CD8-positive, alpha-beta T cell (primary cell): ENCODE measurements at regions of chr4 and their contacts with region 1.

Region 1: GRCh38 chr4:1266881-1267763 is 18.2 kb upstream of the CTBP1 start:
- DNase-seq: peak in 2 of 9 experiments; percentile 23 to 64
- ATAC-seq: peak; percentile 78
- H3K4me3 ChIP-seq: peak overlapping the region in 1 of 2 experiments; percentile 46
- H3K4me3 Mint-ChIP-seq: peak overlapping the region; percentile 76
- H3K27ac ChIP-seq: peak overlapping the region; percentile 57 to 73
- H3K27ac Mint-ChIP-seq: peak overlapping the region; percentile 93
- H3K4me1 ChIP-seq: peaks cover 12% of the 10 kb centered on the region
- H3K4me1 Mint-ChIP-seq: peaks cover 20% of the 10 kb centered on the region
- H3K27me3 ChIP-seq: no peaks in the 10 kb centered on the region
- H3K27me3 Mint-ChIP-seq: no peaks in the 10 kb centered on the region
- CTCF ChIP-seq: no peak

Region 2: DNA sequence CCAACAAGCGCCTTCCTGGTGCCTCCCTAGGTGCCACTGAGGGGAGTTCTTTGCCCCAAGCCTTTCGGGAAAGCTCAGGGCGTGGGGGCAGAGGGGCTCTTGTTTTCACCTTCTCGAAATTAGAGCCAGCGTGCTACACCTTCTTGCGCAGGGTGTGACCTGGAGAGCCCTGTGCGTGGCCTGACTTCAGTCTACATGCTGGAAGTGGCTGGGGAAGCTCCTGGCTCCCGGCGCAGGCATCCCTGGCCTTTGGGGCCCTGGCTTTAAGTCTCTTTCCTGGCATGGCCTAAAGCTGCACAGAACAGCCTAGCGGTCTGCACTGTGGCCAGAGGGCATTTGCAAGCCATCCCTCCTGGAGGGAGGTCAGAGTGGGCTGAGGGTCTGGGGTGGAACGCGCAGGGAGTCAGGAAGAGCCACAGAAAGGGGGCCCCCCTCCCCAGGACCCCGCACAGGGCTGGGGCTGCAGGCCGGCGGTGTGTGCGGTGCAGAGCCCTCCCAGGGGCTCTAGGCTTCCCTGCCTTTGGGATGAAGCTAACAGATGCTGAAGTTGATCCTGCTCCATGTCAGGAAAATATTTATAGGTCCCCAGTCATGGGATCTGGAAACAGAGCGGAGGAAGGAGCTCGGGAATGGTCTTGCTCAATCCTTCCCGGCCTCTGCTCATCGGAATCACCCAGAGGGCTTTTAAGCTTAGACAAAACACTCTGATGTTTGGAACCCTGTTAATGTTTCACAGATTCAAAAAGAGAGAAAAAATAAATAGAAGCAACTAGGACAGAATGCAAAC is 94.0 kb before region 1 on chr4:
- CTCF ChIA-PET with region 1: interaction called, 90 read pairs
- POLR2A ChIA-PET with region 1: interaction called, 7 read pairs
- intact Hi-C with region 1: no loop called
- DNase-seq: no peak
- ATAC-seq: no peak
- H3K4me3 ChIP-seq: no peak overlapping the region
- H3K4me3 Mint-ChIP-seq: peak overlapping the region; percentile 39
- H3K27ac ChIP-seq: no peak overlapping the region
- H3K27ac Mint-ChIP-seq: no peak overlapping the region
- H3K4me1 ChIP-seq: peaks cover 21% of the 10 kb centered on the region
- H3K4me1 Mint-ChIP-seq: peaks cover 18% of the 10 kb centered on the region
- H3K27me3 ChIP-seq: peaks cover 12 to 18% of the 10 kb centered on the region in 2 experiments
- H3K27me3 Mint-ChIP-seq: peaks cover 13% of the 10 kb centered on the region
- CTCF ChIP-seq: no peak

Region 3: DNA sequence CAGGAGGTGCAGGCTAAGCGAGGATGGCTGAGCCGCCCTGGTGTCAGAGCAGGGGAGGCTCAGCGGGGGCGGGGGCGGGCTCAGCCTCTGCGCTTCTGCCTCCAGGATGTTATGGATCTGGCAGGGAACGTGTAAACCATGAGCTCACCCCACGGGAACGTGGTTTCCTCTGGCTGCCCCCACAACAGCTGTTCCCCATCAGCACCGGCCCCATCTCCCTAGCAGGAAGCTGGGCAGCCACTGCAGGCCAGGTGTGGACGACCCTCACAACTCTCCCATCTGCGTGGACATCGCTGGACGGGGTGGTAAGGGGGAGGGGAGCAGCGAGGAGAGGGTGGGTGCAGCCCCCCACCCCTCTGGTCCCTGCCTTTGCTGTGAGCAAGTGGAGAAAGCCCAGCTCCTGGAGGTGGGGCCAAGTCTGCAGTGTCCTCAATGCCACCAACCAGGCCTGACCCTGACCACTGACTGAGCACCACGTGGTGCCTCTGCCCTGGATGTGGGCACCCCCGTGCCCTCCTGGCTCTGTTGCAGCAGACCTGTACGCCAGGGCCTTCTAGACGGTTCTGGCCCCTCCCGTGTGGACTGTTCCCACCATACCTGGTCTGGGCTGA is 66.6 kb before region 1 on chr4:
- CTCF ChIA-PET with region 1: interaction called, 8 read pairs
- POLR2A ChIA-PET with region 1: no interaction called
- intact Hi-C with region 1: loop called (anchors 5 kb)
- DNase-seq: peak in 6 of 9 experiments; percentile 25 to 71 (median 54)
- ATAC-seq: no peak
- H3K4me3 ChIP-seq: peak overlapping the region; percentile 69 to 90
- H3K4me3 Mint-ChIP-seq: peak overlapping the region; percentile 87
- H3K27ac ChIP-seq: peak overlapping the region; percentile 87 to 91
- H3K27ac Mint-ChIP-seq: peak overlapping the region; percentile 95
- H3K4me1 ChIP-seq: peaks cover 47% of the 10 kb centered on the region
- H3K4me1 Mint-ChIP-seq: peaks cover 53% of the 10 kb centered on the region
- H3K27me3 ChIP-seq: no peaks in the 10 kb centered on the region
- H3K27me3 Mint-ChIP-seq: no peaks in the 10 kb centered on the region
- CTCF ChIP-seq: no peak

Region 4: DNA sequence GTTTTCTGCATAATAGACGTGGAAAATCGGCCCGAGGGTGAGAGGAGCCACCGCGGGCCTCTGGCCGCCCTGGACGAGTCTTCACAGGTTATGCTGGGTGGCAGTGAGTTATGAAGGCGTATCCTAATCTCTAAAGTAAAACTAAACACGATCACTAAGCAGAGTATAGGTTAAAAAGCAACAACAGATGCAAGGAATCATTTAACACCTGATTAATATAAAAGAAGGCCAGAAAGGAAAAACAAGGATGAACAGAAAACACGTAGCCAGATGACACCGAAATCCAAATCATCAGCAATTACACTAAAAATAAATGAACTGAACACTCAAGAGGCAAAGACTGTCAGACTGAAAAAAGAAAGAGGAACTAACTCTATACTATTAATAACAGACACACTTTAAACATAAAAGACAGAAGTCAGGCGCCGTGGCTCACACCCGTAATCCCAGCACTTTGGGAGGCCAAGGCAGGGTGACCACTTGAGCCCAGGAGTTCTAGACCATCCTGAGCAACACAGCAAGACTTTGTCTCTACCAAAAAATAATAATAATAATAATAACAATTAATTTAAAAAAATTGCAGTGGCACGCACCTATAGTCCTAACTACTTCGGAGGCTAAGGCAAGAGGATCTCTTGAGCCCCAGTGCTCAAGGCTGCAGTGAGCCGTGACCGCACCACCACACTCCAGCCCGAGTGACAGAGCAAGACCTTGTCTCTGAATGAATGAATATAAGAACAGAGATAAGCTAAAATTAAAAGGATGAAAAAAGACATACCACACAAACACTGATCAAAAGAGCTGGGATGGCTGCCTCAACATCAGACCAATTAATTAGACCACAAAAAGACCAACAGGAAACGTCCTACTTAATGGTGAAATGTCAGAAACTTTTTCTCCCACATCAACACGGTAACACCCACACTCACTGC is 48.2 kb before region 1 on chr4:
- CTCF ChIA-PET with region 1: interaction called, 9 read pairs
- POLR2A ChIA-PET with region 1: no interaction called
- intact Hi-C with region 1: loop called in 1 of 2 experiments (anchors 5 kb)
- DNase-seq: no peak
- ATAC-seq: no peak
- H3K4me3 ChIP-seq: no peak overlapping the region
- H3K4me3 Mint-ChIP-seq: peak overlapping the region; percentile 18
- H3K27ac ChIP-seq: no peak overlapping the region
- H3K27ac Mint-ChIP-seq: peak overlapping the region; percentile 69
- H3K4me1 ChIP-seq: peaks cover 25% of the 10 kb centered on the region
- H3K4me1 Mint-ChIP-seq: peaks cover 43% of the 10 kb centered on the region
- H3K27me3 ChIP-seq: no peaks in the 10 kb centered on the region
- H3K27me3 Mint-ChIP-seq: no peaks in the 10 kb centered on the region
- CTCF ChIP-seq: no peak

Region 5: DNA sequence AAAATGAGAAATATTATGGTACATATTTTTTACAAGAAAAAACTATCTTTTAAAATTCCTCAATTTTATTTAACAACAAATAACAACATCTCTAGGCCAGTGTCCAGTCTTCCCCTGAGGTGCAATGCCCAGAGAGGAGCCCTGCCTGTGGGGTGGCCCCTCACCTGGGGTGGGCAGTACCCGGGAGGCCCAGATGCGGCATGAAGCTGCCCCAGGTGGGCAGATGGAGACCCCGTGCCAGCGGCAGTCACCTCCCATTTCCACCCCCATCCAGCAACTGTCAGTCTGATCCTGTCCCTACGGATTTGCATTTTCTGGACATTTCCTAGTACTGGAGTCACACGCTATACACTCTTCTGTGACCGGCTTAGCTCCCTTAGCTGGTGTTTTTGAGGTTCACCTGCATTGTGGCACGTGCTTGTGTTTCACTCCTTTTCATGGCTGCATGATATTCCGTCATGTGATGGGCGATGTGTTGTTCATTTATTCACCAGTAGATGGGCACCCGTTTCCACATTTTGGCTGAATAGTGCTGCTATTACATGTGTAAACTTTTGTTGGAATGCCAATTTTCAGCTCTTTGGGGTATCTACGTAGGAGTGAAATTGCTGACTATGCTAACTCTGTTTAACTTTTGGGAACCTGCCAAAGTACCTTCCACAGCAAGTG is 10.7 kb after region 1 on chr4:
- CTCF ChIA-PET with region 1: interaction called, 12 read pairs
- POLR2A ChIA-PET with region 1: no interaction called
- intact Hi-C with region 1: no loop called
- DNase-seq: peak in 1 of 9 experiments; percentile 39
- ATAC-seq: no peak
- H3K4me3 ChIP-seq: no peak overlapping the region
- H3K4me3 Mint-ChIP-seq: no peak overlapping the region
- H3K27ac ChIP-seq: no peak overlapping the region
- H3K27ac Mint-ChIP-seq: no peak overlapping the region
- H3K4me1 ChIP-seq: no peaks in the 10 kb centered on the region
- H3K4me1 Mint-ChIP-seq: no peaks in the 10 kb centered on the region
- H3K27me3 ChIP-seq: no peaks in the 10 kb centered on the region
- H3K27me3 Mint-ChIP-seq: peaks cover 3% of the 10 kb centered on the region
- CTCF ChIP-seq: peak; percentile 38

Region 6: DNA sequence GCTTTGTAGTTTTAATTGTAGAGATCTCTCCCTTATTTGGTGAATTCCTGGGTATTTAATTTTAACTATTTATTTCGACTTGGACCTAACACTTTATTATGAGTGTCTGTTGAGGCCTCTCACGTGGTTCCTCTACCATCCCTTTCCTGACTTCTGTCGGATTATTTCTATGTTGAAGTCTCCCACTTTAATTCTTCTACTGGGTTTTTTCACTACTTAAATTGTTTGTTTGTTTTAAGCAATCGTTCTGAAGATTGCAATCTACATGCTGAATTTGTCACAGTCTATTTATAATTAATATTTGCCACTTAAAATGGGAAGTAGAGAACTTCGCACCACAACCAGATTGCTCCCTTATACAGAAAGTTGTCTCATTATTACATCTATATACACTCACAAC is 159.9 kb after region 1 on chr4:
- CTCF ChIA-PET with region 1: no interaction called
- POLR2A ChIA-PET with region 1: no interaction called
- intact Hi-C with region 1: no loop called
- DNase-seq: no peak
- ATAC-seq: no peak
- H3K4me3 ChIP-seq: no peak overlapping the region
- H3K4me3 Mint-ChIP-seq: no peak overlapping the region
- H3K27ac ChIP-seq: no peak overlapping the region
- H3K27ac Mint-ChIP-seq: no peak overlapping the region
- H3K4me1 ChIP-seq: no peaks in the 10 kb centered on the region
- H3K4me1 Mint-ChIP-seq: no peaks in the 10 kb centered on the region
- H3K27me3 ChIP-seq: no peaks in the 10 kb centered on the region
- H3K27me3 Mint-ChIP-seq: peaks cover 19% of the 10 kb centered on the region
- CTCF ChIP-seq: no peak